ENCODE measurements at regions of chr3 and their contacts with region 1.

Region 1: GRCh38 chr3:115783938-115784738 is 160.8 kb downstream of the GAP43 start:
- DNase-seq: peak; percentile 92 to 96 (median 95)
- H3K4me3 ChIP-seq: peak overlapping the region; percentile 84
- H3K27ac ChIP-seq: peak overlapping the region; percentile 70 to 95
- H3K4me1 ChIP-seq: peaks cover 1% of the 10 kb centered on the region
- H3K27me3 ChIP-seq: no peaks in the 10 kb centered on the region
- CTCF ChIP-seq: peak; percentile 88 to 97 (median 93)
- EP300 ChIP-seq: no peak
- POLR2A ChIP-seq: peak; percentile 23

Region 2: DNA sequence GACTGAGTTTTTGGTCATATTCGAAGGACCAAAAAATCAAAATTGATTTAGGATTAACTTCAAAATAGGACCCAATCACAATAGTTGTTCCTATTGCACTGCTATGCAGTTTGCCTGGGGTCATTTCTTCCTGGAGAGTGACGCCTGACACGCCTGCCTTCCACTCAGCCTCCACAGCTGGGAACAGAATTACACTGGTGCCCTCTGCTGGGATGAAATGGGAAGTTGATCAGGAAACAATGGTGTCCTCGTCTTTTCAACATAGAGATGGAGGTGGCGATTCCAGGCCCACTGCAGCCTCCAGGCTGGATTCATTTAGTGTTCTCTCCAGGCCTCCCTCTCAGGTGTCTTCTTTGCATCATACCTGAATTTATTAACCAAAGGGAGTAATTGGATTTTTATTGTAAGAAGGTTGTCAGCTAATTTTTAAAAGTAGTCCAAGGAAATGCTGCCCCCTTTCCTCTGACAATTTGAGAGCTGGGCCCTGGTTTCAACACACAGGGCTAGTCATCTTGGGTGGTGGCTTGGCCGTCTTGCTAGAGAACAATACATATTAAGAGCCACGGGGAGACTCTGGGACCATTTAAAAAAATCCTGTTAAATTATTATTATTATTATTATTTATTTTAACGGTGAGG is 91.1 kb before region 1 on chr3:
- intact Hi-C with region 1: loop called in 1 of 4 experiments (anchors 10 kb)
- DNase-seq: peak; percentile 50 to 74 (median 59)
- H3K4me3 ChIP-seq: no peak overlapping the region
- H3K27ac ChIP-seq: no peak overlapping the region
- H3K4me1 ChIP-seq: peaks cover 3% of the 10 kb centered on the region
- H3K27me3 ChIP-seq: no peaks in the 10 kb centered on the region
- CTCF ChIP-seq: peak; percentile 58 to 74 (median 68)
- EP300 ChIP-seq: no peak
- POLR2A ChIP-seq: no peak

Region 3: GRCh38 chr3:115704661-115705338 is 79.3 kb before region 1 on chr3:
- intact Hi-C with region 1: loop called in 2 of 4 experiments (anchors 10 kb)
- DNase-seq: peak in 1 of 5 donors; percentile 21
- H3K4me3 ChIP-seq: no peak overlapping the region
- H3K27ac ChIP-seq: peak overlapping the region in 1 of 2 donors; percentile 39
- H3K4me1 ChIP-seq: peaks cover 7% of the 10 kb centered on the region
- H3K27me3 ChIP-seq: no peaks in the 10 kb centered on the region
- CTCF ChIP-seq: no peak
- EP300 ChIP-seq: no peak
- POLR2A ChIP-seq: no peak